ENCODE measurements at regions of chr6 and their contacts with region 1.

Region 1: GRCh38 chr6:43733471-43734293 is 36.3 kb upstream of the VEGFA start:
- DNase-seq: peak; percentile 56
- CTCF ChIP-seq: no peak

Region 2: DNA sequence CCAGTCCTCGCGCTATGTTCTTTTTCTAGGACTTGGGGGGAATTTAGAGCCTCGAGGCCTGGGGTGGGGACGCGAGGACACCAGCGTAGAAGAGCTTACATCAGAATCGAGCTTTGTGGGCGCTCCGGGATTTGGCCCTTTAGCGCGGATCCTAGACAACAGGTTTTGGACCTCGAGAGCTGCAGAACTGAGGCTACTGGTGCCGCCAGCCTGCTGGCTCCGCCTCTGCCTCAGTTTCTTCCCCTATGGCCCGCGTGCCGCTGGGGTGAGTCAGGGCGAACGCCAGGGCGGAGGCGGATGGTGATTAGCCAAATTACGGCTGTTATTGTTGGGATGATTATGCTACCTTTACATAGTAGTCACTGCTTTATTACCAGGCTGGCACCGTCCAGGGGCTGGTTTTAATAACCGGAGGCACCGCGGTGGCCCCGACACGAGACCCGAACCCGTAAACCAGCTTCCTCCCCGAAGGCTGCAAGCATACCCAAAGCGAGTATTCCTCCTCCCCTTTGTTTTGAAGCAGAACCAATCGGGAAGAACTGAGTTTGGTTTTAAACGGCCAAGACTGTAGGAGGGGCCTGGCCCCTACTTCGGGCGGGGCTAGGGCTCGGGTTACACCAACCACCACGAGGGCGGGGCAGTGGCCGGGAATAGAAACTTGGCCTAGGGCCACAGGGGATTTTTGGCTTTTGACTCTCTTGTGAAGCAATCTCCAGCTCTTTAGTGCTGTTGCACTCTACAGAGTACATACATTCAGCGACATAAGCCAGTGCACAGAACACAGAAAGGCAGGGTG is 104.0 kb before region 1 on chr6:
- CTCF ChIA-PET with region 1: no interaction called
- POLR2A ChIA-PET with region 1: no interaction called
- DNase-seq: peak; percentile 98
- CTCF ChIP-seq: no peak

Region 3: GRCh38 chr6:43687437-43688347 is 46.0 kb before region 1 on chr6 and contains the start of gene MRPS18A:
- CTCF ChIA-PET with region 1: no interaction called
- POLR2A ChIA-PET with region 1: no interaction called
- DNase-seq: peak; percentile 90
- CTCF ChIP-seq: no peak

Region 4: DNA sequence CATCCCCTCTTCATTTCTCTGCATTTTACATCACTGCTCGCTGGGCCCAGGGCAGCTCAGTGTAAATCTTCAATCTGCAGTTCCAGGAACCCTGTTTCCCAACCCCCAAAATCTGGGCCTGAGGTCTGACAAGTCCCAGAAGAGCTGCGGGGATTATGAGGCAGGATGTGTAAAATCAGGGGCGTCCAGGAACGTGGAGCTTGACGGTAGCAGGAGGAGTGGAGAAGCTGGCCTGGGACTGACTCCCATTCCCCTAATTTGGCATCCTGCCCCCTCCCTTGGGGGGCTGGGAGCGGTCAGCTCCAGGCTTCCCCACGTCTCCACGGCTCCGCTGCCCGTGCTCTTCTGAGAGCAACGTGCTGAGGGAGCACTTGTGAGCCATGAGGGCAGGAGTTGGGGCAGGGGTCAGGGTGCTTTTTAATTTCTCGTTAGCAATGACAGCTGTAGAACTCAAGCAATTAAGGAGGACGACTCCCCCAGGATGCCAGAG is 13.0 kb after region 1 on chr6:
- CTCF ChIA-PET with region 1: interaction called, 11 read pairs
- POLR2A ChIA-PET with region 1: no interaction called
- DNase-seq: no peak
- CTCF ChIP-seq: no peak